Heart right ventricle (tissue), 16 donors: ENCODE measurements at regions of chr19 and their contacts with region 1.

Region 1: GRCh38 chr19:18603255-18603957 is 3.2 kb downstream of the CRLF1 start:
- DNase-seq: no peak
- ATAC-seq: peak in 6 of 8 donors; percentile 20 to 39 (median 30)
- H3K4me3 ChIP-seq: peak overlapping the region in 4 of 10 donors; percentile 9 to 27 (median 15)
- H3K27ac ChIP-seq: peak overlapping the region in 1 of 10 donors; percentile 7
- H3K4me1 ChIP-seq: peaks cover 5 to 40% (median 22%) of the 10 kb centered on the region in 9 donors
- H3K27me3 ChIP-seq: peaks cover 32 to 96% (median 90%) of the 10 kb centered on the region in 7 donors
- CTCF ChIP-seq: peak in 1 of 9 donors; percentile 20

Region 2: DNA sequence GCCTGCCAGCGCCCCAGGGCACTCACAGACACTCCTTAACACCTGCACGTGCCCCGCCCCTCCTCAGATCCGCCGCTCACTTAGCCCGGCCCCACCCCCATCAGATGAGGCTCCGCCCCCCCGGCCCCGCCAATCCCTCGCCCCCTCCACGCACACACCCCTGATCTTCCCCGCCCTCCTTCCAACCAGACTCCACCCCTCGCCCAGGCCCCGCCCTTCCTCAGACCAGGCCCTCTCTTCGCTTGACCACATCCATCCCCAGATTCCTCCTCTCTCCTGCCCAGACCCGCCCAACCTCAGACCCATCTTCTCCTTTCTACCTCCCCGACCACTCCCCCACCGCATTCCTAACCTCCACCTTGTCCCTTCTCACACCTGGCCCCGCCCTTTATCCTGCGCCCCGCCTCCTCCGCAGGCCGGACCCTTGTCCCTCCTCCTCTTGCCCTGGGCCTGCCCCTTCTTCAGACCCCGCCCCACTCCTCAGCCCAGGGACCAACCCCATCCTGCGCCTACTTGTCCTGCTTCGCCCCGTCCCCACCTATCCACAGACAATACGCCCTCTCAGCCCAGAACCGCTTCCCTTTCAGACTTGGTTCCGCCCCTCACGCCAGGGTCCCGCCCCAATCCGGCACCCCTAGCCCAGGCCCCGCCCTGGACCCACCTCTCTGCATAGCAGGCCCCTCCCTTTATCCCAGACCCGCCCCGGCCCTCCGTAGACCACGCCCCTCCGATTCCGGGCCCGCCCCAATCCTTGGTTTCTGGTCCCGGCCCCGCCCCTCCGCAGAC is 33.0 kb after region 1 on chr19:
- intact Hi-C with region 1: loop called in 1 of 10 experiments (anchors 2 kb)
- DNase-seq: peak; percentile 98 to 99
- ATAC-seq: peak; percentile 97 to 99 (median 98)
- H3K4me3 ChIP-seq: peak overlapping the region; percentile 55 to 80 (median 68)
- H3K27ac ChIP-seq: peak overlapping the region in 9 of 10 donors; percentile 62 to 89 (median 82)
- H3K4me1 ChIP-seq: peaks cover 0 to 27% (median 10%) of the 10 kb centered on the region in 9 donors
- H3K27me3 ChIP-seq: no peaks in the 10 kb centered on the region
- CTCF ChIP-seq: no peak

Region 3: DNA sequence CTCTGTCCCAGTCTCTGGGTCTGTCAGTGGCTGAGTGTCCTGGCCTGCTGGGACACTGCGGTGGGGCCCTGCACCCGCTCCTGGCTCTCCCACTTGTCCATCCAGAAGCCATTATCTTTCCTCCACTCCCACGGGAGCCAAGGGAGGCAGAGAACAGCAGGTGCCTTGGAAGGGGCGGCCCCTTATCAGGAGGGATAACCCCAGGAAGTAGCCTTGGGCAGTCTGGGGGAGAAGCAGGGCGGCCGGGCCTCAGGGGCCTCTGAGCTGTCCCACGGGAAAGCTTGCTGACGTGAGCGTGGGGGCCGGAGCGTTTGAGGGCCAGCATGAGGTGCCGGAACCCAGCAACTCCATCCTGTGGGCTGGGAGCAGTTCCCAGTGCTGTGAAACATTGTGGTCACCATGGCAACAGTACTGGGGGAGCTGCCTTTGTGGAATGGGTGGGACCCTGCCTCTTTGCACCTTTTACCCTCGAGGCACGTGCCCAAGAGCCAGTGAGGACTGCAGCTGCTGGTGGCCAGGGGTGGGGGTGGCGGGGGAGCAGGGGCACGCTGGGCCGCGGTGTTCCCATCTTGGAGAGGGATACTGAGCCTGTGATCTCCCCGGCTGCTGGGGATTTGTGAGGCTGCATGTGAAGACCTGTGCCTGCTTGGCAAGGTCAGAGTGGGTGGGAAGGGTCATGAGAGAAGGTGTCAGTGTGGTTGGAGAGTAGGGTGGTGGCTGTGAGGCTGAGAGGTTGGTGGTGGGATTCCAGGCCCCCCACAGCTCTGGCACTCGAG is 54.4 kb after region 1 on chr19:
- intact Hi-C with region 1: loop called in 1 of 10 experiments (anchors 5 kb)
- DNase-seq: peak; percentile 77 to 84
- ATAC-seq: peak; percentile 20 to 74 (median 55)
- H3K4me3 ChIP-seq: no peak overlapping the region
- H3K27ac ChIP-seq: peak overlapping the region in 9 of 10 donors; percentile 70 to 90 (median 87)
- H3K4me1 ChIP-seq: peaks cover 17 to 51% (median 46%) of the 10 kb centered on the region in 9 donors
- H3K27me3 ChIP-seq: no peaks in the 10 kb centered on the region
- CTCF ChIP-seq: no peak

Region 4: DNA sequence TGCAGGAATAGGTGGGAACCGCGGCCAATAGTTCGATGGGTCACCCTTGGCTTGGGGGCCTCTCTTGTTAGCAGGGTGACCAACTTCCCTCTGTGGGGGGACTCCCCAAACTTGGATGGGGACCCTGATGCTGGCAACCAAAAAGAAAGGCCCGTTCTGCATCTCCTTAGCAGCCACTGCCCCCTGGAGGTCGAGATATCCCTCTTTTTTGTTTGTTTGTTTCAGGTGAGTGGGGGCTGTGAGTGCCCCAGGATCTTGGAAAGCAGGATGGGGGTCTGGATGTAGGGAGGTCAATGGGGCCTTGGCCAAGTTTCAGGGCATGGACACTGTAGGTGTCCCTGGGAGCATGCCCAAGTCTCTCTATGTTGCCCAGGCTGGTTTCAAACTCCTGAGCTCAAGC is 72.4 kb after region 1 on chr19:
- intact Hi-C with region 1: loop called in 5 of 10 experiments (anchors 5 to 10 kb)
- DNase-seq: no peak
- ATAC-seq: no peak
- H3K4me3 ChIP-seq: no peak overlapping the region
- H3K27ac ChIP-seq: no peak overlapping the region
- H3K4me1 ChIP-seq: peaks cover 0 to 30% (median 12%) of the 10 kb centered on the region in 9 donors
- H3K27me3 ChIP-seq: no peaks in the 10 kb centered on the region
- CTCF ChIP-seq: peak in 7 of 9 donors; percentile 28 to 49 (median 44)

Region 5: DNA sequence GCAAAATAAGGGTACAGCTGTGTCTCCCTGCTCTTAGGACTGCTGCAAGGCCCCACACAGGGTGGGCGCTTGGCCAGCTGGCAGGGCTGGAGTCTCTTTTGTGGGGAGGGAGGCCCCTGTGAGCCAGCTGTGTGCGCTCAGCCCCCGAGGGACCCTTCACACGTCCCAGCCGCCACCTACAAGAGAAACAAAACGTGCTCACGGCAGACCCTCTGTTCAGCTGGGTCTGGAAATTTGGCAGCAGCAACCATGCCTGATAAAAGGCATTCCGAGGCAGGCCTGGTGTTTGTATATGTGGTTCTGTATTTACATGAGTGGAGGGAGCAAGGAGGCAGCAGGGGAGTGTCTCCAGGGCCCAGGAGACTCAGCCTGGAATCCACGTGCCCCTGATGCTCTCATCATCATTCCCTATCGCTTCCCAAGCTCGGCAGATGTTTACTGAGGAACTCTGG is 129.8 kb after region 1 on chr19:
- intact Hi-C with region 1: no loop called
- DNase-seq: peak in 1 of 2 donors; percentile 58
- ATAC-seq: peak in 6 of 8 donors; percentile 36 to 60 (median 52)
- H3K4me3 ChIP-seq: no peak overlapping the region
- H3K27ac ChIP-seq: no peak overlapping the region
- H3K4me1 ChIP-seq: peaks cover 0 to 28% (median 14%) of the 10 kb centered on the region in 9 donors
- H3K27me3 ChIP-seq: no peaks in the 10 kb centered on the region
- CTCF ChIP-seq: no peak

Region 6: GRCh38 chr19:18846862-18847548 is 243.6 kb after region 1 on chr19:
- intact Hi-C with region 1: loop called in 2 of 10 experiments (anchors 10 kb)
- DNase-seq: peak; percentile 77 to 83
- ATAC-seq: peak; percentile 70 to 79 (median 75)
- H3K4me3 ChIP-seq: no peak overlapping the region
- H3K27ac ChIP-seq: peak overlapping the region in 8 of 10 donors; percentile 58 to 92 (median 86)
- H3K4me1 ChIP-seq: peaks cover 29 to 94% (median 76%) of the 10 kb centered on the region in 9 donors
- H3K27me3 ChIP-seq: no peaks in the 10 kb centered on the region
- CTCF ChIP-seq: peak; percentile 65 to 93 (median 89)

Region 7: DNA sequence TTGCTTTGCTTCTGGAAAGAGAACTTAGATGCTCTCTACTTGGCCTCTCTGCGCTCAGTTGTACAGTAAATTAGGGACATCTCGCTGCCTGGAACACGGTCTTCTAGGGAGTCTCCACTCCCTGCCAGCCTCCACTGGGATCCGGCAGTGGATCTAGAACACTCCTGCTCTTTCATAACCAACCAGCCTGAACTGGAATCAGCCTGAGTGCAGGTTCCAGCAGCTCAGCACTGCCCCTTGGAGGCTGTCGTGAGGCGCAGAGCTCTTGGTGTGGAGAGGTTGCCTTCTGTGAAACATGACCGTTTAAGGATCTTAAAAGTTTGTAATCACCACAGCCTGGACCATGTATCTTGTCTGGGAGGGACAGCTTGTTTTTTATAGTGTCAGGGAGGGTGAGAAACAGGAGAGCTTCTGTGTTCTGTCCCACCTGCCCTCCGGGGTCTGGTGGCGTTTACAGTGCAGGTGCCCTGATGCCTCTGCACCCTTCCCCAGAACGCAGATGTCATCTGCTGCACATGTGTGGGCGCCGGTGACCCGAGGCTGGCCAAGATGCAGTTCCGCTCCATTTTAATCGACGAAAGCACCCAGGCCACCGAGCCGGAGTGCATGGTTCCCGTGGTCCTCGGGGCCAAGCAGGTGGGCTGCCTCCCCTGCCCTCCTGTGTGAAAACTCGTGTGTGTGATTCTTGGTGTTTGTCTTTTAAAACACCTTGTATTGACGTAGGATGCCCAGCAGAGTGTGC is 253.2 kb after region 1 on chr19:
- intact Hi-C with region 1: loop called in 1 of 10 experiments (anchors 5 kb)
- DNase-seq: no peak
- ATAC-seq: no peak
- H3K4me3 ChIP-seq: no peak overlapping the region
- H3K27ac ChIP-seq: no peak overlapping the region
- H3K4me1 ChIP-seq: peaks cover 0 to 28% (median 18%) of the 10 kb centered on the region in 9 donors
- H3K27me3 ChIP-seq: no peaks in the 10 kb centered on the region
- CTCF ChIP-seq: peak in 1 of 9 donors; percentile 25